Endothelial cell of umbilical vein (primary cell): ENCODE measurements at regions of chr1 and their contacts with region 1.

Region 1: DNA sequence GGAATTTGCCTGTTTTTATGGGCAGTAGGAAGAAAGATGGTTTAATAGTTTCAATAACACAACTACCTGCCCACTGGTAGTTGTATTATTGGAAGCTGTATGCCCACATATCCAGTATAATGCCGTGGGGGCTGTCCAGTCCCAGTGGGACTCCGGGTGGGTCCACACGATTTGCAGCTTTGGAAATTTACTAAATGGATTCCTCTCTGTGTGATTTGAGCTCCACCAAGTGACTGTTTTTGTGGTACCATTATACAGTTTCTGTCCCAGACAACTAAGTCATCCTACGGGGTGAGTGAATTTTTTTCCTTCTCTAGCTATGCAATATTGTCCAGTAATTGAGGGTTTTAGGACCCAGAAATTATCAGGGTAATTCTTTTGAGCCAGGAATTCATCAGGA is 86.8 kb downstream of the PLA2G4A start:
- DNase-seq: peak; percentile 20
- H3K4me3 ChIP-seq: no peak overlapping the region
- H3K27ac ChIP-seq: no peak overlapping the region
- H3K4me1 ChIP-seq: peaks cover 20% of the 10 kb centered on the region
- H3K27me3 ChIP-seq: no peaks in the 10 kb centered on the region
- CTCF ChIP-seq: no peak
- POLR2A ChIP-seq: no peak

Region 2: DNA sequence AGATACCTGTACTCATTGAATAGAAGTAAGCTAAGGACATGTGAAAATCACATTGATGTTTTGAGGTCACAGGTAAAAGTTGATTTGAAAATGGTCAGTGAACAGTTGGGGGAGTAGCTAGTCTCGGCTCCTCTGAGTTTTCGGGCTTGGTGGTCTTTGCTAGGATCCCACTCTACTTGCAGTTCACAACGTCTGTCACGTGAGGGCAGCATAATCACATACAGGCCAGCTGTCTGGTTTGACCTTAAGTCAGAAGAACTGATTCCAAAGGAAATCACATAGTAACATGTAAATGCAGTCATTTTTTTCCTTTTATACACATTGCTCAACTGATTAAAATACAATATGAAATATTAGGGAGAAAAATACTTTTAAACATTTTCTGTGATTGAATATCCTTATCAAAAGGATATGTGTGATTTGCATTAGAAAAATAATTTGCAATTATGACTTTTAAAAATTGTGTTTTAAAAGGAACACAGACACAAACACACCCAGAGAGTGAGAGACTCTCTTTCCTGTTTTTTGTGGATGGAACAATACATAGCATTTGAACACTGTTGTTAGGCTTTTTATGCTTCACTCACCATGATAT is 432.8 kb before region 1 on chr1:
- CTCF ChIA-PET with region 1: interaction called, 6 read pairs
- POLR2A ChIA-PET with region 1: no interaction called
- dilution Hi-C with region 1: no loop called
- intact Hi-C with region 1: loop called (anchors 1 kb)
- DNase-seq: peak; percentile 90
- H3K4me3 ChIP-seq: no peak overlapping the region
- H3K27ac ChIP-seq: peak overlapping the region; percentile 19
- H3K4me1 ChIP-seq: peaks cover 16% of the 10 kb centered on the region
- H3K27me3 ChIP-seq: no peaks in the 10 kb centered on the region
- CTCF ChIP-seq: peak; percentile 81 to 87
- POLR2A ChIP-seq: no peak

Region 3: DNA sequence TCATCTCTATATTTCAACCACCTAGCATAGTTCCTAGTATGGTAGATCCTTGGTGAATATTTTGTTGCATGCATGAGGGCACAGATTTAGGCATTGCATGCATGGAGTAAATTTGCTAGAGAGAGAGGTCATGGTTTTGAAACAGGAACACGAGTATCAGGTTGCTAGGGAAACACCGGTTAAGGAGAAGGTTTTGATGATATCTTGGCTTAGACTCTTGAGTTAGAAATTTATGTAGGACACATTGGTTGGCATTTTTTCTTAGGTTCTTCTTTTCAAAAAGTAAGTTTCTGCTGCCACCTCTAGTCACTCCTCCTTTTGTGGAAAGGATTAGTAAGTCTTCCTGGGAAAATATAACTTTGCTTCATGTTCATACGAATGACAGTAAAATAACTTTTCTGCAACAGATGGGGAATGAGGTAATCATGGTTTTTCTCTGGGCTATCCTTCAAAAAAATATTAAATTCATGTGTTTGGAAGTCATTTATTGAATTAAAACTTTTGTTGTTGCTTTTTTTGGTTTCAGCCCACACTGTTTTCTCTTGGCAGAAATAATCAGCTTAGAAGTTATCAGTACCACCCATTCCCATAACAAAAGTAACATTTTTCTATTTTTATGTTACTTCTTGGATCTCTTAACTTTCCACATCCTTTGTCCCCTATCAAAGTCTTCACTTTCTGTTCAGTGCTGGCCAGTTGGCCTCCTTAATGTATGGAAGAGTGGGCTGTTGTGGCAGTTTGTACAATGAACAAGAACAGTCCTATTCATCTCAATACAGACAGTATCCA is 10.5 kb after region 1 on chr1:
- CTCF ChIA-PET with region 1: interaction called, 11 read pairs
- POLR2A ChIA-PET with region 1: no interaction called
- dilution Hi-C with region 1: no loop called
- intact Hi-C with region 1: no loop called
- DNase-seq: peak; percentile 55
- H3K4me3 ChIP-seq: no peak overlapping the region
- H3K27ac ChIP-seq: no peak overlapping the region
- H3K4me1 ChIP-seq: peaks cover 5% of the 10 kb centered on the region
- H3K27me3 ChIP-seq: no peaks in the 10 kb centered on the region
- CTCF ChIP-seq: no peak
- POLR2A ChIP-seq: no peak

Region 4: GRCh38 chr1:186950547-186950946 is 35.0 kb after region 1 on chr1:
- CTCF ChIA-PET with region 1: interaction called, 13 read pairs
- POLR2A ChIA-PET with region 1: no interaction called
- dilution Hi-C with region 1: no loop called
- intact Hi-C with region 1: loop called (anchors 1 kb)
- DNase-seq: peak; percentile 89
- H3K4me3 ChIP-seq: no peak overlapping the region
- H3K27ac ChIP-seq: peak overlapping the region; percentile 97
- H3K4me1 ChIP-seq: peaks cover 58% of the 10 kb centered on the region
- H3K27me3 ChIP-seq: no peaks in the 10 kb centered on the region
- CTCF ChIP-seq: no peak
- POLR2A ChIP-seq: no peak